Heart left ventricle (tissue), 16 donors: ENCODE measurements at regions of chr15 and their contacts with region 1.

Region 1: DNA sequence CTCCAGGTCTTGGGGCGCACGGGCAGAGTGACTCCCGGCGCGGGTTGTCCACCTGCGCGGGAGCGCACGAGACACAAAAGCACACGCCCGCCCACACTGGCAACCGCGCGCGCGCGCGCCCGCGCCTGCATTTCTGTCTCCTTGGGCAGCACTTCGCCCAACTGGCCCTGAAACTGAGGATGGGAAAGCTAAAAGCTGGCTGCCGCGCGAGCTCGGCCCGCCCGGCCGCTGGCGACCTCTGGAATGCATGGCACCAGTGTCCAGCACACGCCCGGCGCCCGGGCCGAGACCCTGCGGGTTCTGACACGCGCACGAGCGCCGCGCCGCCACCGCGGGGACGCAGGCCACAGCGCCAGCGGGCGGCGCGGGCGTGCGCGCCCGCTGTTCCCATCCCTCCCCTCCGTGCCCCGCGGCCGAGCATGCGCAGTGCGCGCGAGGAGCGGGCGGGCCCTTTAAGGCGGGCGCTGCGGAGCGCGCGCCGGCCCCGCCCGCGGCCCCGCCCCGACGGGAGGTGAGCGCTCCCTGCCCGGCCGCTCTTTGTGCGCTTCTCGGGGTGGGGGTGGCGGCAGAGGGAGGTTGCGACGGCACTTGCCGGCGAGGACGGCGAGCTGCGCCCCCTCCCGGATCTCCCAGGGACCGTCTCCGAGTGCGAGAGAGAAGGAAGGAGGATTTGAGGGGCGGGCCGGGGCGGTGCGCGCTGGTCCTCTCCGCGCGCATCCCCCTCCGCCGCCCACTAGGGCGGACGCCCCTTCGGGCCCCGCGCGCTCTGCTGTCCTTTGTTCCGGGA is 1.0 kb upstream of the MEX3B start:
- DNase-seq: peak; percentile 92 to 96 (median 93)
- ATAC-seq: peak; percentile 46 to 89 (median 80)
- H3K4me3 ChIP-seq: peak overlapping the region; percentile 65 to 97 (median 87)
- H3K27ac ChIP-seq: peak overlapping the region; percentile 90 to 100 (median 97)
- H3K4me1 ChIP-seq: peaks cover 0 to 33% (median 19%) of the 10 kb centered on the region in 12 donors
- H3K27me3 ChIP-seq: no peaks in the 10 kb centered on the region
- CTCF ChIP-seq: peak; percentile 49 to 89 (median 76)
- POLR2A ChIP-seq: peak in 1 of 2 donors; percentile 66

Region 2: DNA sequence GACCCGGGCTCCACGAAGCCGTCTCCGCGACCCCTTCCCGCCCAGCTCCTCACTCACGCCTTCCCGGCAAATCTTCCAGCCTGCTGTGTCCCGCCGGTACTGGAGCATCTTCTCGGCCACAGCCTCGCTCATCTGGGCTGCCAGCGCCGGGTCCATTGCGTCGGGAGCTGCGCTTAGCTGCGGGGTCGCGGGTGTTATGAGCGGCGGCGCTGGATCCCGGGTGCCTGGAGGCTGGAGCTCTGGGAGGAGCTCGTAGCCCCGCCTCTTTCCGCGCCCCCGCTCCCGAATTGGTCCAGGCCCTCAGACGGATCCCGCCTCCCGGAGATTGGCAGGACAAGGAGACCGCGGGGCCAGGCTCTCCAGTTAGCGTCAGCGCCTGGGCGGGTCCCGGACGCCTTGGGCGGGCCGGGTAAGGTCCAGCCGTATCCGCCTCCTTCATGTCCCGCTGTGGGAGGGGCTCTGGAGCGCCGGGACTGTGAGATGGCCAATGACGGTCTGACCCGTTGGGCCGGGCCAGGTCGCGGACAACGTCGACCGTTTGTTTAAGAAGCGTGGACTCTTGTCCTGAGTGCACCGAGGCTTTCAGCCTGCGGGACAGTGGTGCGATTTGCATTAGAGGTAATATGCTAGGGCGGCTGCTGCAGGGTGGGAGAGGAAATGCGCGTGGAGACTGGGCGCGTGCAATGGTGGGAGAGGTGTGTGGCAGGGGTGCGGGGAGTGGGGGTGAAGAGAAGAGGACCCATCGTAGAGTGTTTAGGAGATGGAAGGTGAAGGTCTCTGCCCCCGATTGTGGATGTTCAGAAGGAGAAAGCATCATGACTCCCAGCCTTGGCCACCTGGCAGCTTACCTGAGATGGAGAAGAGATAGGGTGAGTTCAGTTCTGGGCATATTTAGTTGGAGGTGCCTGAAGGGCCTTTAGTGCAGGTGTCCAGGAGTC is 722.6 kb before region 1 on chr15 and contains the start of gene STARD5:
- intact Hi-C with region 1: loop called in 1 of 10 experiments (anchors 5 kb)
- DNase-seq: peak; percentile 99 to 100 (median 99)
- ATAC-seq: peak; percentile 100
- H3K4me3 ChIP-seq: peak within 1 kb of the TSS; percentile 45 to 99 (median 78)
- H3K27ac ChIP-seq: peak within 1 kb of the TSS in 9 of 12 donors; percentile 22 to 80 (median 54)
- H3K4me1 ChIP-seq: peaks cover 0 to 18% (median 7%) of the 10 kb centered on the region in 12 donors
- H3K27me3 ChIP-seq: no peaks in the 10 kb centered on the region
- CTCF ChIP-seq: no peak
- POLR2A ChIP-seq: peak in 1 of 2 donors; percentile 75
- total RNA-seq, gene STARD5: 0.49 to 3.0 (median 1.4) TPM

Region 3: DNA sequence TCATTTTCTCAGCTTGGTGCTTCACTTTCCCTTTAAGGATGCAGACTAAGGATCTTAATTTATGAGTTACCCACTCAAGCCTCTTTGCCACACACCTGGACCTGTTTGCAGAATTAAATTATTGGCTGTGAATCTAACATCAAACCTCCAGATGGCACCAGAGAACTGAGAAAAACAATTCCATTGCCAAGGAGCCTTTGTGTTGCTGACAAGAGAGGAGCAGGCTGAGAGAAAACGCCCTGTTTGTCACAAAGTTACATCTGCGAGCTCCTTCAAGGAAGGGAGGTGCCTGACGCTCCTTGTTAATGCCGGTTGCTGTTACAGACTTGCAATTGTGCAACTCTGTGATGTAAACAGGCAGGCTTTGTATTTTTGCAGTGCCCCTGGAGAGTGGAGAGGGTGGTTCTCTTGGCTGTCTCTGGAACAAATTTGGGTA is 636.5 kb before region 1 on chr15:
- intact Hi-C with region 1: loop called in 2 of 10 experiments (anchors 5 to 10 kb)
- DNase-seq: peak in 4 of 5 donors; percentile 18 to 66 (median 44)
- ATAC-seq: peak; percentile 73 to 92 (median 89)
- H3K4me3 ChIP-seq: no peak overlapping the region
- H3K27ac ChIP-seq: no peak overlapping the region
- H3K4me1 ChIP-seq: peaks cover 0 to 10% (median 2%) of the 10 kb centered on the region in 12 donors
- H3K27me3 ChIP-seq: no peaks in the 10 kb centered on the region
- CTCF ChIP-seq: peak; percentile 29 to 61 (median 52)
- POLR2A ChIP-seq: no peak

Region 4: GRCh38 chr15:81813178-81813577 is 233.7 kb before region 1 on chr15:
- intact Hi-C with region 1: loop called in 1 of 10 experiments (anchors 10 kb)
- DNase-seq: no peak
- ATAC-seq: no peak
- H3K4me3 ChIP-seq: no peak overlapping the region
- H3K27ac ChIP-seq: no peak overlapping the region
- H3K4me1 ChIP-seq: peaks cover 0 to 11% (median 0%) of the 10 kb centered on the region in 12 donors
- H3K27me3 ChIP-seq: no peaks in the 10 kb centered on the region
- CTCF ChIP-seq: peak in 4 of 12 donors; percentile 8 to 39 (median 20)
- POLR2A ChIP-seq: no peak

Region 5: GRCh38 chr15:81950841-81951414 is 95.9 kb before region 1 on chr15:
- intact Hi-C with region 1: loop called in 2 of 10 experiments (anchors 5 to 10 kb)
- DNase-seq: no peak
- ATAC-seq: no peak
- H3K4me3 ChIP-seq: no peak overlapping the region
- H3K27ac ChIP-seq: no peak overlapping the region
- H3K4me1 ChIP-seq: peaks cover 0 to 8% (median 0%) of the 10 kb centered on the region in 12 donors
- H3K27me3 ChIP-seq: no peaks in the 10 kb centered on the region
- CTCF ChIP-seq: no peak
- POLR2A ChIP-seq: no peak

Region 6: GRCh38 chr15:82197733-82198594 is 151.1 kb after region 1 on chr15:
- intact Hi-C with region 1: loop called in 1 of 10 experiments (anchors 10 kb)
- DNase-seq: peak in 4 of 5 donors; percentile 64 to 71 (median 67)
- ATAC-seq: peak; percentile 44 to 90 (median 82)
- H3K4me3 ChIP-seq: no peak overlapping the region
- H3K27ac ChIP-seq: no peak overlapping the region
- H3K4me1 ChIP-seq: peaks cover 0 to 23% (median 7%) of the 10 kb centered on the region in 12 donors
- H3K27me3 ChIP-seq: no peaks in the 10 kb centered on the region
- CTCF ChIP-seq: peak; percentile 61 to 84 (median 78)
- POLR2A ChIP-seq: no peak

Region 7: GRCh38 chr15:82540055-82540983 is 493.5 kb after region 1 on chr15 and contains the start of gene RPS17:
- intact Hi-C with region 1: loop called in 2 of 10 experiments (anchors 10 kb)
- DNase-seq: peak; percentile 96 to 98 (median 97)
- ATAC-seq: peak; percentile 96 to 98 (median 98)
- H3K4me3 ChIP-seq: peak within 1 kb of the TSS; percentile 64 to 99 (median 77)
- H3K27ac ChIP-seq: peak within 1 kb of the TSS; percentile 69 to 94 (median 84)
- H3K4me1 ChIP-seq: peaks cover 6 to 47% (median 20%) of the 10 kb centered on the region in 12 donors
- H3K27me3 ChIP-seq: no peaks in the 10 kb centered on the region
- CTCF ChIP-seq: peak; percentile 99 to 100 (median 100)
- POLR2A ChIP-seq: peak; percentile 49 to 87
- total RNA-seq, gene RPS17: 621 to 1,280 (median 873) TPM